ENCODE measurements at regions of chr10 and their contacts with region 1.

Region 1: GRCh38 chr10:118405928-118406327 is 63.8 kb upstream of the FAM204A start:
- DNase-seq: no peak
- ATAC-seq: no peak
- H3K4me3 ChIP-seq: no peak overlapping the region
- H3K4me3 Mint-ChIP-seq: no peak overlapping the region
- H3K27ac ChIP-seq: no peak overlapping the region
- H3K27ac Mint-ChIP-seq: no peak overlapping the region
- H3K4me1 ChIP-seq: no peaks in the 10 kb centered on the region
- H3K4me1 Mint-ChIP-seq: no peaks in the 10 kb centered on the region
- H3K27me3 ChIP-seq: peaks cover 2 to 13% of the 10 kb centered on the region in 2 experiments
- H3K27me3 Mint-ChIP-seq: peaks cover 41% of the 10 kb centered on the region
- CTCF ChIP-seq: no peak

Region 2: GRCh38 chr10:117594722-117595121 is 811.2 kb before region 1 on chr10:
- CTCF ChIA-PET with region 1: no interaction called
- POLR2A ChIA-PET with region 1: no interaction called
- intact Hi-C with region 1: no loop called
- DNase-seq: no peak
- ATAC-seq: no peak
- H3K4me3 ChIP-seq: no peak overlapping the region
- H3K4me3 Mint-ChIP-seq: no peak overlapping the region
- H3K27ac ChIP-seq: no peak overlapping the region
- H3K27ac Mint-ChIP-seq: no peak overlapping the region
- H3K4me1 ChIP-seq: no peaks in the 10 kb centered on the region
- H3K4me1 Mint-ChIP-seq: no peaks in the 10 kb centered on the region
- H3K27me3 ChIP-seq: peaks cover 0 to 13% of the 10 kb centered on the region in 2 experiments
- H3K27me3 Mint-ChIP-seq: peaks cover 52% of the 10 kb centered on the region
- CTCF ChIP-seq: no peak

Region 3: DNA sequence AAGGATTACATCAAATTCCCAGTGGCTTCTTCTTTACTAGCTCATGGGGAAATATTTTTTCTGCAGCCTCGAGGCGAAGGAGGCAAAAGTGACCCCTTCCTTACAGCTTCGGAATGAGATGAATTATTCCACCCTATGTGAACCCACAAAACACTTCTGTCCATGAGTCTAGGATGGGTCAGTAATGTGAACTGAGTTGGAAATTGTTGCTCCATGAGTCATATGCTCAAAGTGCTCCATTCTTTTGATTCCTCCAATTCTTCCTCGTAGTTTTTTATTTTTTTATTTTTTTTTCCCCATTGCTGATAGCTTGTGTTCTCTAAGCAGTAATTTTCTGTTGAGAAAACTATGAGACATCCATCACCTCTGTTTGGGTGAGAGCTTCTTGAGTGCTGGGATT is 32.1 kb before region 1 on chr10:
- CTCF ChIA-PET with region 1: no interaction called
- POLR2A ChIA-PET with region 1: no interaction called
- intact Hi-C with region 1: loop called in 1 of 2 experiments (anchors 1 kb)
- DNase-seq: no peak
- ATAC-seq: no peak
- H3K4me3 ChIP-seq: no peak overlapping the region
- H3K4me3 Mint-ChIP-seq: no peak overlapping the region
- H3K27ac ChIP-seq: no peak overlapping the region
- H3K27ac Mint-ChIP-seq: no peak overlapping the region
- H3K4me1 ChIP-seq: no peaks in the 10 kb centered on the region
- H3K4me1 Mint-ChIP-seq: no peaks in the 10 kb centered on the region
- H3K27me3 ChIP-seq: peaks cover 7 to 15% of the 10 kb centered on the region in 2 experiments
- H3K27me3 Mint-ChIP-seq: peaks cover 59% of the 10 kb centered on the region
- CTCF ChIP-seq: no peak

Region 4: DNA sequence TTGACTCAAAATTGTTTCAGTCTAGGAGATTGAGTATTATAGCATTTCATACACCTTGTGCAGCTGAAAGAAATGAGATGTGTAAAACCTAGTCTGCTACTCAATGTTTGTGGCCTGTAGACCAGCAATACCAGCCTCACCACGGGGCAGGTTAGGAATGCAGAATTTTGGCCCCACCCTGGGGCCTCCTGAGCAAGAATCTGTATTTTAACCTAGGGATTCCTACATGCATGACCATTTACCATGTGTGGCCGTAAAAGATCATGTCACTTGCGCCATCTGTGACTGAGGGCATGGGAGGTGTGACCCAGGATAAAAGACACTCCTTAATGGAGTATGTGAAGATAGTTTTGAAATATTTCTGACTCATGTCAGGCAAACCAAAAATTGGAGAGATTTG is 21.1 kb before region 1 on chr10:
- CTCF ChIA-PET with region 1: no interaction called
- POLR2A ChIA-PET with region 1: no interaction called
- intact Hi-C with region 1: no loop called
- DNase-seq: no peak
- ATAC-seq: no peak
- H3K4me3 ChIP-seq: no peak overlapping the region
- H3K4me3 Mint-ChIP-seq: no peak overlapping the region
- H3K27ac ChIP-seq: no peak overlapping the region
- H3K27ac Mint-ChIP-seq: no peak overlapping the region
- H3K4me1 ChIP-seq: no peaks in the 10 kb centered on the region
- H3K4me1 Mint-ChIP-seq: no peaks in the 10 kb centered on the region
- H3K27me3 ChIP-seq: peaks cover 0 to 16% of the 10 kb centered on the region in 2 experiments
- H3K27me3 Mint-ChIP-seq: peaks cover 48% of the 10 kb centered on the region
- CTCF ChIP-seq: no peak

Measured in CD4-positive, alpha-beta T cell (primary cell).